Endothelial cell of umbilical vein (primary cell): ENCODE measurements at regions of chr12 and their contacts with region 1.

Region 1: GRCh38 chr12:113261847-113262470 is 40.7 kb downstream of the TPCN1 start:
- DNase-seq: no peak
- H3K4me3 ChIP-seq: no peak overlapping the region
- H3K27ac ChIP-seq: no peak overlapping the region
- H3K4me1 ChIP-seq: peaks cover 13% of the 10 kb centered on the region
- H3K27me3 ChIP-seq: no peaks in the 10 kb centered on the region
- CTCF ChIP-seq: no peak
- POLR2A ChIP-seq: no peak

Region 2: GRCh38 chr12:113247123-113248055 is 14.6 kb before region 1 on chr12:
- CTCF ChIA-PET with region 1: no interaction called
- POLR2A ChIA-PET with region 1: no interaction called
- dilution Hi-C with region 1: no loop called
- intact Hi-C with region 1: loop called (anchors 2 kb)
- DNase-seq: peak; percentile 67
- H3K4me3 ChIP-seq: no peak overlapping the region
- H3K27ac ChIP-seq: peak overlapping the region; percentile 2
- H3K4me1 ChIP-seq: peaks cover 31% of the 10 kb centered on the region
- H3K27me3 ChIP-seq: no peaks in the 10 kb centered on the region
- CTCF ChIP-seq: no peak
- POLR2A ChIP-seq: no peak

Region 3: GRCh38 chr12:113299619-113300237 is 37.8 kb after region 1 on chr12:
- CTCF ChIA-PET with region 1: no interaction called
- POLR2A ChIA-PET with region 1: no interaction called
- dilution Hi-C with region 1: no loop called
- intact Hi-C with region 1: loop called (anchors 1 kb)
- DNase-seq: peak; percentile 58
- H3K4me3 ChIP-seq: no peak overlapping the region
- H3K27ac ChIP-seq: peak overlapping the region; percentile 65
- H3K4me1 ChIP-seq: peaks cover 6% of the 10 kb centered on the region
- H3K27me3 ChIP-seq: no peaks in the 10 kb centered on the region
- CTCF ChIP-seq: no peak
- POLR2A ChIP-seq: no peak